Activated naive CD4-positive, alpha-beta T cell treated with anti-CD3 and anti-CD28 coated beads for 36 hours (primary cell): ENCODE measurements at regions of chr3 and their contacts with region 1.

Region 1: DNA sequence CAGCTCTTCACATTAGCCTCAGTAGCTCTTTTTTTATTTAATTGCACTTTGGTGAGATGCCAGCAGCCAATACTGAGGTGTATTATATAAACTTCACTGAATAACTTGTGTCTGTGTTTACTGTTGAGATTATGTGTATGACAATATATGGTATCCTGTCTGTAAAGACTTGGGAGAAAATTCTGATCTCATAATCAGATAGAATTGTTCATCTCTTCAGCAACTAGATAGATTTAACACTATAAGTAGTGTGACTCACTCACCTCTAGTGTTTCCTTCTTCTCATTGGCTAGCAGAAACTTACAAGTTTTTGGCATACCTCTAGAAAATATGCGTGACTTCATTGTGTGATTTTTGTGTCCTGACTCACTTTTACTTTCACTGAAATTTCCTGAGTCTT is 67.6 kb upstream of the TGFBR2 start:
- DNase-seq: no peak
- H3K4me3 Mint-ChIP-seq: no peak overlapping the region
- H3K27ac Mint-ChIP-seq: no peak overlapping the region
- H3K4me1 Mint-ChIP-seq: peaks cover 19% of the 10 kb centered on the region
- H3K27me3 Mint-ChIP-seq: no peaks in the 10 kb centered on the region

Region 2: GRCh38 chr3:29922992-29923746 is 615.6 kb before region 1 on chr3:
- CTCF ChIA-PET with region 1: no interaction called
- intact Hi-C with region 1: no loop called
- DNase-seq: no peak
- H3K4me3 Mint-ChIP-seq: no peak overlapping the region
- H3K27ac Mint-ChIP-seq: no peak overlapping the region
- H3K4me1 Mint-ChIP-seq: no peaks in the 10 kb centered on the region
- H3K27me3 Mint-ChIP-seq: peaks cover 15% of the 10 kb centered on the region

Region 3: GRCh38 chr3:30524357-30525040 is 14.3 kb before region 1 on chr3:
- CTCF ChIA-PET with region 1: no interaction called
- intact Hi-C with region 1: loop called (anchors 1 kb)
- DNase-seq: peak; percentile 34
- H3K4me3 Mint-ChIP-seq: peak overlapping the region; percentile 1
- H3K27ac Mint-ChIP-seq: no peak overlapping the region
- H3K4me1 Mint-ChIP-seq: peaks cover 15% of the 10 kb centered on the region
- H3K27me3 Mint-ChIP-seq: no peaks in the 10 kb centered on the region